Vagina (tissue), 2 donors: ENCODE measurements at regions of chr9 and their contacts with region 1.

Region 1: DNA sequence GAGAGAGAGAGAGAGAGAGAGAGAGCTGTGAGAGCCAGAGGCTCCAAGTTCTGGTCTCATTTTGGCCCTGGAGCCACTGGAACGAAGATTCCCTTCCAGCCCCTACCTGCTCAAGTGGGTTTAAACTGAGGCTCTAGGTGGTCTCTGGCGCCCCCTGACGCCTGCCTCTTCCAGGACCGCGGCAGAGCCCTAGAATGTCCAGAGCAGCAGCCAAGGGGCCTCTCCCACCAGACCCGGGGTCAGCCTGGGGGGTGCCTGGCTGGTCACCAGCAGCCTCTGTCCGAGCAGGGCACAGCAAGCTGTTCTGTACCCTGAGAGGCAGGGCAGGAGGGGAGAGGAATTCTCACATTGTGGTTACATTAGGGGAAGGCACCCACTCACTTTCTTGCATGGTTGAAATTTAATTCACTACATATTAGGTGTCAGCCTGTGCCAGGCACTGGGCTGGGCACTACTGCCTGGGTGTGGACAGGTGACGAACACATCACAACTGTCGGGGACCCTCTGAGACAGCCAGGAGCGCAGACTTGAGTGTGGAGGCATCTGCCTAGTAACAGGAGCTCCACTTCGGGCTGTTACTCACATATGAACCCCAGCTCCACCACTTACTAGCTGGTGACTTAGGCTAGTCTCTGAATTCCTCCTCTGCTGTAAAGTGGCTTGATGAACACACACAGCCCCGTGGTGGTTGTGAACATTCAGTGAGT is 44.5 kb downstream of the AMBP start:
- DNase-seq: peak; percentile 52 to 74
- H3K4me3 ChIP-seq: no peak overlapping the region
- H3K27ac ChIP-seq: no peak overlapping the region
- H3K4me1 ChIP-seq: no peaks in the 10 kb centered on the region
- H3K27me3 ChIP-seq: no peaks in the 10 kb centered on the region
- CTCF ChIP-seq: peak in 1 of 3 experiments; percentile 26
- POLR2A ChIP-seq: no peak

Region 2: GRCh38 chr9:113807173-113808061 is 226.1 kb before region 1 on chr9:
- intact Hi-C with region 1: loop called (anchors 5 kb)
- DNase-seq: no peak
- H3K4me3 ChIP-seq: no peak overlapping the region
- H3K27ac ChIP-seq: no peak overlapping the region
- H3K4me1 ChIP-seq: peaks cover 16% of the 10 kb centered on the region
- H3K27me3 ChIP-seq: no peaks in the 10 kb centered on the region
- CTCF ChIP-seq: peak; percentile 54 to 84 (median 79)
- POLR2A ChIP-seq: no peak

Region 3: GRCh38 chr9:113963017-113963620 is 70.4 kb before region 1 on chr9:
- intact Hi-C with region 1: no loop called
- DNase-seq: no peak
- H3K4me3 ChIP-seq: no peak overlapping the region
- H3K27ac ChIP-seq: no peak overlapping the region
- H3K4me1 ChIP-seq: peaks cover 12% of the 10 kb centered on the region
- H3K27me3 ChIP-seq: no peaks in the 10 kb centered on the region
- CTCF ChIP-seq: peak in 1 of 3 experiments; percentile 24
- POLR2A ChIP-seq: no peak